ENCODE measurements at regions of chr13 and their contacts with region 1.

Region 1: GRCh38 chr13:91078093-91078679 is 269.3 kb upstream of the MIR17HG start:
- DNase-seq: no peak
- H3K4me3 ChIP-seq: no peak overlapping the region
- H3K27ac ChIP-seq: no peak overlapping the region
- H3K4me1 ChIP-seq: no peaks in the 10 kb centered on the region
- H3K27me3 ChIP-seq: no peaks in the 10 kb centered on the region
- CTCF ChIP-seq: peak; percentile 56; the same call in 1 of the 2 replicates

Region 2: DNA sequence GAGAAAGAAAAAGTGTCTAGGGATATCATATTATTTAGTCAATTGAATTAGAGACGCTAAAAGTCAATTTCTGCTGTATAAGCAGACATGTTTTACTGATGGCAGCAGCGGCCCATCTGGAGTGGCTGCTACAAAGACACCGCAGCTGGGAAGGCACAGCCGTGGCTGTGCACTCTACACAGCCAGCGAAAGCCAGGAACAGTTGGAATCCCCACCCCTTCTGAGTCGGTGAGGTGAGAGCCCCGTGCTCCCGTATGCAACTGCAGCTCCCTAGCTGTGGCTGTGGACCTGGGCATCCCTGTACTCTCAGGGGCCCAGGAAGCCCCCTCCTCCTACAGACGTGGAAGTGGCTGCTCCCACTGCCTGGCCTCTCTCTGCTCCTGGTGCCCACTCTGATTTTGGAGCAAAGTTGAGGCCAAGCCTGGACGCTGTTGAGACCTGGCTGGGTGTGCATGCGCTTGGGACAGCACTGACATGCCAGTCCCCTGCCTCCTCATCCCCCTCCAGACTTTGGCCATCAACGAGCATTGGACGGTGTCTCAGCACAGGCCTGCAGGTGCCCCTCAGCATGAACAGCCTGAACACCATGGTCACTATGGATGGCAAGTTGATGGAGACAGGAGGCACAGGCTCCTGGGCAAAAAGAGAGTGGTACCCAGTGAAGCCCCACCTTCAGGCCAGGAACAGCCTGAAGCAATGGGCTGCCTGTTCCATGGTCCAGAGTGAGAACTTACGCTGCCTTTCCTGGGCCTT is 674.7 kb before region 1 on chr13:
- CTCF ChIA-PET with region 1: no interaction called
- POLR2A ChIA-PET with region 1: no interaction called
- intact Hi-C with region 1: no loop called
- DNase-seq: no peak
- H3K4me3 ChIP-seq: no peak overlapping the region
- H3K27ac ChIP-seq: no peak overlapping the region
- H3K4me1 ChIP-seq: no peaks in the 10 kb centered on the region
- H3K27me3 ChIP-seq: no peaks in the 10 kb centered on the region
- CTCF ChIP-seq: no peak

Region 3: DNA sequence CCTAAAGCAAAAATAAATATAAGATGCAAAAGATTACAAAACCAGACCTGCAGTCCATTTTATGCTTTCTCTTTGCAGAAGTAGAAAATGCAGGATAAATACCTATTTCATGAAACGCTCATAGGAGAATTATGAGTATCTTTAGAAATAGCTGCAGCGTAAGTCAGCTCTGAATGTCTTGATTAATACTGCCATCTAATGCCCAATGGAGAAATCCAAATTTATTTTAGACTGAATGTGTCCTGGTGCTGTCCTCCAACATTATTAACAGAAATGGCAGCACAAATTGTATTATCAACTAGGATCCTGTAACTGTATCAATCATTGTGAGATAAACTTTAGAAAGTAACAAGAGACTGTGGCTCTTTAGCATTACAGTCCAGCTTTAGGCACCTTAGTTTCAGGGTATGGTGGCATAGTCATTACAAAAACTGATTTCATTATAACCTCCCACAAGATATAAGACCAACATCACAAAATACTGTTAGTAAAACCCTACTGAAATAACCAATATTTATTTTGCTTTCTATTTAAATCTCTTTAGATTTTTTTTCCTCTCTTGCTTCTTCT is 107.2 kb after region 1 on chr13:
- CTCF ChIA-PET with region 1: interaction called, 10 read pairs
- POLR2A ChIA-PET with region 1: no interaction called
- intact Hi-C with region 1: loop called (anchors 10 kb)
- DNase-seq: no peak
- H3K4me3 ChIP-seq: no peak overlapping the region
- H3K27ac ChIP-seq: no peak overlapping the region
- H3K4me1 ChIP-seq: no peaks in the 10 kb centered on the region
- H3K27me3 ChIP-seq: no peaks in the 10 kb centered on the region
- CTCF ChIP-seq: peak; percentile 51

Measured in PC-9 (cell line).